GM12878 (cell line): ENCODE measurements at regions of chr17 and their contacts with region 1.

Region 1: DNA sequence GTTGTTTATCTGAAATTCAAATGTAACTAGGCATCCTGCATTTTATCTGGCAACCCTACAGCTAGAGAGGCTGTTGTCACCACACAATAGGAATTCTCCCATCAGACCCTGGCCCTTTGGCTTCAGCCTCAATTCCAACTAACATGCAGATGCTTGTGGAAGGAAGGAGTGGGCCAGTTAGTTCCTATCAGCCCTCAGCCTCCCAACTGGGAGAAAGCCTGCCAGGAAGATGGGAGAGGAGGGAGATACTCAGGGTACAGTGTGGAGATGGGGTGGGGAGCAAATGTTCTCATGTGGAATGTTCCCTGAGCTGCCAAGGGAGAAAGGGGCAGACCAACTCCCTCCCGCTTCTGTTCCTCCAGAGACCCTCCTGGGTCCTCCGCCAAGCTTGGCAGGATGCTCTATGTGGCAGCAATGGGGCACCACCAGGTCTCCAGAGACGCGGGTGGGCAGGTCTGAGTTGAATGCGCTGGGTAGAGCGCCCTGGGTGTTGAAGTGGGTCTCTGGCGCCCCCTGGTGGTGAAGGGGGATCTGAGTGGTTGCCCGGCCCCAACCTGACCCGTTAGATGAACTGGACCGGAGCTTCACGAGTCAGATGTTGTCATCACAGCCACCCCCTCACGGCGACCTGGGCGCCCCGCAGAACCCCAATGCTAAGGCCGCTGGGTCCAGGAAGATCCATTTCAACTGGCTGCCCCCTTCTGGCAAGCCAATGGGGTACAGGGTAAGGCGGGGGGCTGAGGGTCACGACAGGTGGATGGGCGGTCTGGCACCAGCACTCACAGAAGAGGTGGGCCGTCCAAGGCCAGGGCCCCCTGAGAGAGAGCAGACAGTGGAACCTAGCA is 15.2 kb downstream of the GALK1 start:
- DNase-seq: no peak
- ATAC-seq: peak; percentile 82
- H3K4me3 ChIP-seq: no peak overlapping the region
- H3K27ac ChIP-seq: no peak overlapping the region
- H3K4me1 ChIP-seq: peaks cover 10% of the 10 kb centered on the region
- H3K27me3 ChIP-seq: no peaks in the 10 kb centered on the region
- CTCF ChIP-seq: peak; percentile 85 to 94 (median 88)
- EP300 ChIP-seq: no peak
- POLR2A ChIP-seq: no peak
- RAD21 ChIP-seq: peak; percentile 77

Region 2: GRCh38 chr17:75614006-75614405 is 135.8 kb before region 1 on chr17:
- CTCF ChIA-PET with region 1: interaction called, 43 read pairs
- POLR2A ChIA-PET with region 1: no interaction called
- RAD21 ChIA-PET with region 1: interaction called, 6 read pairs
- SMC1A ChIA-PET with region 1: interaction called, 4 read pairs
- in situ Hi-C with region 1: no loop called
- intact Hi-C with region 1: no loop called
- DNase-seq: no peak
- ATAC-seq: peak; percentile 59
- H3K4me3 ChIP-seq: no peak overlapping the region
- H3K27ac ChIP-seq: no peak overlapping the region
- H3K4me1 ChIP-seq: no peaks in the 10 kb centered on the region
- H3K27me3 ChIP-seq: no peaks in the 10 kb centered on the region
- CTCF ChIP-seq: peak in 2 of 3 experiments; percentile 17 to 38; a peak in 3 of 6 replicates
- EP300 ChIP-seq: no peak
- POLR2A ChIP-seq: no peak
- RAD21 ChIP-seq: peak; percentile 24; the same call in 1 of the 2 replicates

Region 3: DNA sequence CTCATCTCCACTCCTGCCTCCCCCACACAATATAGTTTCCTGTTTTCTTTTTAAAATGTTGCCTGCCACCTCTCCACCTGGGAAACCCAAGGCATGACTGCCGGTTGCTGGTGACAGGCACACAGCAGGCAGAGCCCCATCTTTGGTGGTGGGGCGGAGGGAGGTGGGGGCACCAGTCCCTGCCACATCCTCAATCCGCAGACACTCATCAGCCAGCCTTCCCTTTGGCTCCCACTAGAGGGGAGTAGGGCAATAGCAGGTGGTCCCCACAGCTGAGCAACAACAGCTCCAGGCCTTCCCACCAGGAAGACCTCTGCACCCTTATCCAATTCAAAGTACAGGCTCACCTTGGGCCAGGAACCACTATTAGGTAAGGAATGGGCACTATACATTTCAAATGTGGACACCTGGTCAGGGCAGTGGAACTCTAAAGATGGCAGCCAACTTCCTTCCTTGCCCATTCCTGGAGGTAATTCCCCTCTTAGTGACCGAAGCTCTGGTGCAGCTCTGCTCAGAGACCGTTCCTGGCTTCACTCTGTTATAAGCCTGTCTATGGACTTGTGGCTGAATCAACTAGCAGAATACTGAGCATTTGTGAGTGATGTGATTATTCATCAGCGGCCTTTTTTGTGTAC is 96.7 kb before region 1 on chr17:
- CTCF ChIA-PET with region 1: interaction called, 89 read pairs
- POLR2A ChIA-PET with region 1: no interaction called
- RAD21 ChIA-PET with region 1: interaction called, 7 read pairs
- SMC1A ChIA-PET with region 1: interaction called, 6 read pairs
- in situ Hi-C with region 1: no loop called
- intact Hi-C with region 1: no loop called
- DNase-seq: no peak
- ATAC-seq: peak; percentile 93
- H3K4me3 ChIP-seq: no peak overlapping the region
- H3K27ac ChIP-seq: 0 out of 2 replicates have a peak overlapping the region, but pooled peaks have one; percentile 18
- H3K4me1 ChIP-seq: peaks cover 5% of the 10 kb centered on the region; the same call in 1 of the 2 replicates
- H3K27me3 ChIP-seq: no peaks in the 10 kb centered on the region
- CTCF ChIP-seq: peak; percentile 71 to 95 (median 87)
- EP300 ChIP-seq: no peak
- POLR2A ChIP-seq: no peak
- RAD21 ChIP-seq: peak; percentile 49

Region 4: GRCh38 chr17:75689441-75689873 is 60.3 kb before region 1 on chr17:
- CTCF ChIA-PET with region 1: interaction called, 134 read pairs
- POLR2A ChIA-PET with region 1: interaction called, 8 read pairs
- RAD21 ChIA-PET with region 1: interaction called, 21 read pairs
- SMC1A ChIA-PET with region 1: interaction called, 16 read pairs
- in situ Hi-C with region 1: no loop called
- intact Hi-C with region 1: no loop called
- DNase-seq: peak; percentile 60
- ATAC-seq: peak; percentile 53
- H3K4me3 ChIP-seq: 0 out of 2 replicates have a peak overlapping the region, but pooled peaks have one; percentile 3
- H3K27ac ChIP-seq: peak overlapping the region; percentile 92
- H3K4me1 ChIP-seq: peaks cover 53% of the 10 kb centered on the region
- H3K27me3 ChIP-seq: no peaks in the 10 kb centered on the region
- CTCF ChIP-seq: no peak
- EP300 ChIP-seq: no peak
- POLR2A ChIP-seq: no peak
- RAD21 ChIP-seq: no peak

Region 5: DNA sequence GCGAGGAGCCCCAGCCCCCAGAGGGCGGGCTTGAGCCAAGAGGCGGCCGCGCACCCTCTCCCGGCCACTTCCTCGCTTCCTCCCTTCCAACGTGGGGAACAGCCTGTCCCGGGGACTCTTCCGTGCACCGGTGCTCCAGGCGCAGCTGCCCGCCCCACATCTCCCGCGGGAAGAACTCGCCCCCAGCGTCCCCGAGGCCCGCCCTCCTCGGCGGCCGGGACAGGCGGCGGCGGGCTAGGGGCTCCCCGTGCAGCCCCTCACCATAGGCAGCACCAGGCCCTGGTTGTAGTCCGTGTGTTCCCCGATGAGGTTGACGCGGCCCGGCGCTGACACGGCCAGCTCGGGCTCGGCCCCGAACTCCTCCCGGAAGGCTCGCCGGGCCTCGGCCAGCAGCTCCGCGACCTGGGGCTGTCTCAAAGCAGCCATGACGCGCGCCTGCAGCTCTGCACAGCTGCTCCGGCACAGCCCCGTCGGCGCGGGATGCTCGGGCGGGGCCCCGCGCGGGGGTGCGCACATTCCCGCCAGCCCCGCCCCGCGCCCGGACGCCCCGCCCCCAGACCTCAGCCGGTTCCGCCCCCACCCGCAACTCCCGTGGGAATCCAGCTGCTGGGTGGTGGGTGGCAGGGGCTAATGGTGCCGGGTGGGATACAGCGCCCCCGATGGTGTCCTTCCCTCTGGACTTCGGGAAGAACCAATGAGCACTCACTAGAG is 15.1 kb after region 1 on chr17 and contains the start of gene GALK1:
- CTCF ChIA-PET with region 1: interaction called, 75 read pairs
- POLR2A ChIA-PET with region 1: interaction called, 13 read pairs
- RAD21 ChIA-PET with region 1: interaction called, 32 read pairs
- SMC1A ChIA-PET with region 1: interaction called, 10 read pairs
- in situ Hi-C with region 1: no loop called
- intact Hi-C with region 1: no loop called
- DNase-seq: no peak
- ATAC-seq: peak; percentile 96
- H3K4me3 ChIP-seq: peak within 1 kb of the TSS; percentile 76; the same call in 1 of the 2 replicates
- H3K27ac ChIP-seq: peak within 1 kb of the TSS; percentile 48; the same call in 1 of the 2 replicates
- H3K4me1 ChIP-seq: peaks cover 12% of the 10 kb centered on the region
- H3K27me3 ChIP-seq: no peaks in the 10 kb centered on the region
- CTCF ChIP-seq: peak; percentile 49 to 83 (median 78)
- EP300 ChIP-seq: no peak
- POLR2A ChIP-seq: peak; percentile 83
- RAD21 ChIP-seq: peak; percentile 49
- polyA plus RNA-seq, gene GALK1: 0.21 to 5.9 TPM

Region 6: DNA sequence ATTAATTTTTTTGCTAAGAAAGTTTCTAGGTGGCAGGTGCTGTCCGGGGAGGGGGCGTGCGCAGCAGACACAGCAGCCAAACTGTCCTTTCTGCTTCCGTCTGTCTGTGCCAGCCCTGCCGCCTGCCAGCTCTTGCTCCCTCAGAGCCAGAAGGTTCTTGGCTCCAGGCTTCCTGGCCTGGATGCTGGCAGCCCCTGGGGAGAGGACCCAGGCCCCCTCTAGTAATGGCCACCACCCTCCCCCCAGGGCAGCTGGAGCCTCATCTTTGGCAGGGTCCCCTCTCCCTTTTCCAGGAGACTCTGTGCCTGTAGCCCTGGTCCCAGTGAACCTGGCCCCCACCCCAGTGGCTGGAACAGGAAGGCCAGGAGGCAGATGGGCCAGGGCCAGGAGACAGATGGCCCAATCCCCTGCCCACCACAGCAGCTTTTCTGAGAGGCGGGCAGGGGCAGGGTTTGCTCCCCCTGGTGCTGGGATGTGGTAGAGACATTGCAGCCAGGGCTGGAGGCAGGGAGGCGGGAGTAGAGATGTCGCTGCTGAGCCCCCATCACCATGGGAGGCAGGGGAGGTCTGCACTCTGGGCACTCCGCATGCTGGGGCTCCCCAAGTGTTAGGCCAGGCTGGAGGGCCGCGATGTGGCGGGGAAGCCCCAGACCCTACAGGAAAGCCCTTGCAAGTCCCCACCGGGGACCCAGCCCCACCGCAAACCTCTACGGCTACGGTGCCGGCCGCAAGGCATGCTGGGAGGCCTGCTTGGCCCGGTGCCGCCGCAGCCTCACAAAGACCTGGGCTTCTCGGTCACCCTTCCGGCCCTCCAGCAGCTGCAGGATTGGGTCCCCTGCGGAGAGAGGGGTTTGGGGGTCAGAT is 77.7 kb after region 1 on chr17:
- CTCF ChIA-PET with region 1: interaction called, 27 read pairs
- POLR2A ChIA-PET with region 1: interaction called, 4 read pairs
- RAD21 ChIA-PET with region 1: interaction called, 12 read pairs
- SMC1A ChIA-PET with region 1: interaction called, 5 read pairs
- in situ Hi-C with region 1: no loop called
- intact Hi-C with region 1: no loop called
- DNase-seq: no peak
- ATAC-seq: peak; percentile 79
- H3K4me3 ChIP-seq: no peak overlapping the region
- H3K27ac ChIP-seq: no peak overlapping the region
- H3K4me1 ChIP-seq: no peaks in the 10 kb centered on the region
- H3K27me3 ChIP-seq: no peaks in the 10 kb centered on the region
- CTCF ChIP-seq: peak; percentile 53 to 73 (median 59)
- EP300 ChIP-seq: no peak
- POLR2A ChIP-seq: peak; percentile 68
- RAD21 ChIP-seq: peak; percentile 36; the same call in 1 of the 2 replicates

Region 7: DNA sequence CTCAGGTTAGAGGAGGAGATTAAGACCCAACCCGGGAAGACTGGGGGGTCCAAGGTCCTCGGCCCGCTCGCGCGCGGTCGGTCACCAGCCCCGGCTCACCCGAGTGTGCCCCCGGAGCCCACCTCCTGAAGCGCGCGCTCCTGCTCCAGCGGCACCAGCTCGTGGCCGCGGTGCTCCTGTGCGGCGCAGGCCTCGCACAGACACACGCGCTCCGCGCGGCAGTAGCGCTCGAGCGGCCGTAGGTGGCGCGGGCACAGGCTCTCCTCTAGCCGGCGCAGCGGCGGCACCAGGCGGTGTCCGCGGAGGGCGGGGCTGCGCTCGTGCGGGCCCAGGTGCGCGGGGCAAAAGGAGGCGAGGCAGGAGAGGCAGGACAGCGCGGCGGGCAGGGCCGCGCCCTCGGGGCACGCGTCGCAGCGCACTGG is 128.0 kb after region 1 on chr17:
- CTCF ChIA-PET with region 1: interaction called, 12 read pairs
- POLR2A ChIA-PET with region 1: no interaction called
- RAD21 ChIA-PET with region 1: interaction called, 4 read pairs
- SMC1A ChIA-PET with region 1: interaction called, 3 read pairs
- in situ Hi-C with region 1: no loop called
- intact Hi-C with region 1: no loop called
- DNase-seq: no peak
- ATAC-seq: peak; percentile 83
- H3K4me3 ChIP-seq: peak overlapping the region; percentile 29; the same call in 1 of the 2 replicates
- H3K27ac ChIP-seq: no peak overlapping the region
- H3K4me1 ChIP-seq: peaks cover 25% of the 10 kb centered on the region
- H3K27me3 ChIP-seq: peaks cover 2% of the 10 kb centered on the region in 2 experiments
- CTCF ChIP-seq: peak; percentile 40 to 50 (median 45); a peak in 5 of 6 replicates
- EP300 ChIP-seq: no peak
- POLR2A ChIP-seq: no peak
- RAD21 ChIP-seq: no peak